ENCODE measurements at regions of chr13 and their contacts with region 1.

Region 1: GRCh38 chr13:99484473-99484872 is 16.8 kb upstream of the TM9SF2 start:
- DNase-seq: peak; percentile 93
- H3K4me3 ChIP-seq: no peak overlapping the region
- H3K27ac ChIP-seq: peak overlapping the region; percentile 25
- H3K4me1 ChIP-seq: peaks cover 25% of the 10 kb centered on the region
- H3K27me3 ChIP-seq: no peaks in the 10 kb centered on the region
- CTCF ChIP-seq: no peak

Region 2: DNA sequence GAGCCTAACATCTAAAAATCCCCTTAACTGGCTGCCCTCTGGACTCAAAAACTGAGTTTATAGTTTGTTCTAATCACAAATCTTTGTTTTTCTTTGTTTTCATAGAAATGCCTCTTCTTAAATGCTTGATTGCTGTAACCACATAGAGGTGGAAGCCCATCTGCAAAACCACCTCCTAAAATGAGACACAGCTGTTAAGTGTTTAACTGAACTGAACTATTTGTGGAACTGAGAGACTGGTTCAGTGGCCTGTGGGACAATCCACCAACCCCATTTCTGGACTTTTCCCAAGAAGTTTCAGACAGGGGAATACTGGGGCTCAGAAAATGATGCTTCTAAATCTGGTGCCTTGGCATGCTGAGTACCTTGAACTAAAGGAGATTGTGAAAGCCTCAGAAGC is 34.1 kb before region 1 on chr13:
- CTCF ChIA-PET with region 1: no interaction called
- dilution Hi-C with region 1: loop called (anchors 5 kb)
- in situ Hi-C with region 1: no loop called
- intact Hi-C with region 1: no loop called
- DNase-seq: no peak
- H3K4me3 ChIP-seq: no peak overlapping the region
- H3K27ac ChIP-seq: no peak overlapping the region
- H3K4me1 ChIP-seq: no peaks in the 10 kb centered on the region
- H3K27me3 ChIP-seq: no peaks in the 10 kb centered on the region
- CTCF ChIP-seq: no peak

Region 3: DNA sequence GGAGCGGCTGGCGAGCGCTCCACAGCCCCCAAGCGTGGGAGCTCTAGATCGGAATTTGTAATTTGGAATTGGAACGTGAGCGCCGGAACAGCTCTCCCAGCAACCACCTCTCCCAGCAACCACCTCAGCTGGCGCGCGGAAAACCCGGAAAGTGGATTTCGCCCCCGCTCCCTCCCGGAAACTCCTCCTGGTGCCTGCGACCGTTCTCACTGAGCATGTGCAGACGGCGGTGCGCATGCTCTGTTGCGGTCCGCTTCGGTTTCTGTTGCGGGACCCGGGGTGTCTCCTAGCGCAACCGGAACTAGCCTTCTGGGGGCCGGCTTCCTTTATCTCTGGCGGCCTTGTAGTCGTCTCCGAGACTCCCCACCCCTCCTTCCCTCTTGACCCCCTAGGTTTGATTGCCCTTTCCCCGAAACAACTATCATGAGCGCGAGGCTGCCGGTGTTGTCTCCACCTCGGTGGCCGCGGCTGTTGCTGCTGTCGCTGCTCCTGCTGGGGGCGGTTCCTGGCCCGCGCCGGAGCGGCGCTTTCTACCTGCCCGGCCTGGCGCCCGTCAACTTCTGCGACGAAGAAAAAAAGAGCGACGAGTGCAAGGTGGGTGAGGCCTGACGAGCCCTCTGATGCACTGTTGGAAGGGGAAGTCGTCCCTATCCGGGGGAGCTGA is 16.8 kb after region 1 on chr13 and contains the start of gene TM9SF2:
- CTCF ChIA-PET with region 1: no interaction called
- dilution Hi-C with region 1: no loop called
- in situ Hi-C with region 1: no loop called
- intact Hi-C with region 1: loop called (anchors 1 kb)
- DNase-seq: peak; percentile 97
- H3K4me3 ChIP-seq: peak within 1 kb of the TSS; percentile 76 to 99 (median 79)
- H3K27ac ChIP-seq: peak within 1 kb of the TSS; percentile 84
- H3K4me1 ChIP-seq: peaks cover 29% of the 10 kb centered on the region
- H3K27me3 ChIP-seq: no peaks in the 10 kb centered on the region
- CTCF ChIP-seq: no peak
- total RNA-seq, gene TM9SF2: 87.8 to 143 TPM

Region 4: DNA sequence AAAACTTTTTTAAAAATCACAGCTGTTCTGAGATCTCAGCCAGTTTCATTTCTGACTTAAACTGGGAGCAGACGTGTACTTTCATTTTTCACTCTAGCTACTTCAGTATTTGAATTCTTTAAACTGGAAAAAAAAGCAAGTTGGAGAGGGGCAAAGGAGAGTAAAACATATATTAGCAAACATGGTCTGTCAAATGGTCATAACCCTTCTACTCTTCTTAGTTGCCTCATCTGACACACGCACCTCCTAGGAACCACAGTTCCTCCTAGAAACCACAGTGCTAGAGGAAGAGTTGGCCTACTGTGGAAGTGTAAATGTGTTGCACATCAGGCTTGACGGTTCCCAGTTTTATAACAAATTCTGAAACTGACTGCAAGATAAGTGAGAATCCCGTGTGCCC is 64.0 kb after region 1 on chr13:
- CTCF ChIA-PET with region 1: no interaction called
- dilution Hi-C with region 1: no loop called
- in situ Hi-C with region 1: no loop called
- intact Hi-C with region 1: no loop called
- DNase-seq: no peak
- H3K4me3 ChIP-seq: no peak overlapping the region
- H3K27ac ChIP-seq: no peak overlapping the region
- H3K4me1 ChIP-seq: no peaks in the 10 kb centered on the region
- H3K27me3 ChIP-seq: no peaks in the 10 kb centered on the region
- CTCF ChIP-seq: no peak

Region 5: GRCh38 chr13:99792079-99792921 is 307.8 kb after region 1 on chr13:
- CTCF ChIA-PET with region 1: no interaction called
- dilution Hi-C with region 1: no loop called
- in situ Hi-C with region 1: no loop called
- intact Hi-C with region 1: no loop called
- DNase-seq: no peak
- H3K4me3 ChIP-seq: no peak overlapping the region
- H3K27ac ChIP-seq: no peak overlapping the region
- H3K4me1 ChIP-seq: no peaks in the 10 kb centered on the region
- H3K27me3 ChIP-seq: no peaks in the 10 kb centered on the region
- CTCF ChIP-seq: no peak